ENCODE measurements at regions of chr18 and their contacts with region 1.

Region 1: DNA sequence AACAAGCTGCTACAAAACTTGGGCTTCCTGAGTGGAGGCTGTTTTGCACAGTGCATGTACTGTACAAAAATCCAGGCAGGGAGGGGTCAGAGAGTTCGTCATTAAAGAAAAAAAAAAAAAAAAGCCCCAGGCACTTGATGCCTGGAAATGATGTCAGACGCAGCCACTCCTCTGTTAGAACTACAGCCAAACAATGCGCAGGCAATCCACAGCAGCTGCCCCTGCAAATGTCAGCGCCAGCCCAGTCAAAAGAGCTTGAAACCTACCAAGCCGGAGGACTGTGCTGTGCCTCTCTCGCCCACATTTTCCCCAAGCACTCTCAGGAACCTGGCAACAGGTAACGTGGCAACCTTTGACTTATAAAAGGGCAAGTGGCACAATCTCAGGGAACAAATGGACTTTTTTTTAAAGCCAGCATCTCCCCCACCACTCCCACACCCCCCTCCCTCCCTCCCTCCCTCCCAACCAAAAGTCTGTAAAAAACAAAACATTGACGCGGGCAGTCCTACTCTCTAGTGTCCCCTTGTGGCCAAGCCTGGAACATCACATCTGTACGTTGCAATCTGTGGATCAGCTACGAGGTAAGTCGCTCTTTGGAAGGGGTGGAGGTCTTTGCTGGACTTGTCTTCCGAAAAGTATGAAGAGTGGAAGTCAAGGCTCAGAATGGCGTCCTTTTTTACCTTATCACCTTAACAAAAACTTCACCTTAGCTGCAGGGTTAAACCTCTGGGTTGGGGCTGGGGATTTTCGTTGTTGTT is 144.1 kb downstream of the TGIF1 start:
- DNase-seq: peak; percentile 93 to 97 (median 95)
- H3K4me3 ChIP-seq: peak overlapping the region; percentile 69 to 80 (median 75)
- H3K27ac ChIP-seq: peak overlapping the region; percentile 96 to 97
- H3K4me1 ChIP-seq: peaks cover 16 to 36% (median 36%) of the 10 kb centered on the region in 3 donors
- H3K27me3 ChIP-seq: no peaks in the 10 kb centered on the region
- CTCF ChIP-seq: peak; percentile 98

Region 2: GRCh38 chr18:3451183-3451988 is 142.7 kb before region 1 on chr18:
- intact Hi-C with region 1: loop called (anchors 10 kb)
- DNase-seq: peak; percentile 96 to 99 (median 98)
- H3K4me3 ChIP-seq: peak overlapping the region; percentile 91 to 94 (median 94)
- H3K27ac ChIP-seq: peak overlapping the region; percentile 98 to 99
- H3K4me1 ChIP-seq: peaks cover 4 to 13% (median 8%) of the 10 kb centered on the region in 3 donors
- H3K27me3 ChIP-seq: no peaks in the 10 kb centered on the region
- CTCF ChIP-seq: no peak

Region 3: GRCh38 chr18:3760741-3761140 is 166.7 kb after region 1 on chr18:
- intact Hi-C with region 1: no loop called
- DNase-seq: no peak
- H3K4me3 ChIP-seq: no peak overlapping the region
- H3K27ac ChIP-seq: no peak overlapping the region
- H3K4me1 ChIP-seq: no peaks in the 10 kb centered on the region
- H3K27me3 ChIP-seq: no peaks in the 10 kb centered on the region
- CTCF ChIP-seq: no peak

Measured in kidney (tissue), 22 donors.